ENCODE measurements at regions of chr4 and their contacts with region 1.

Region 1: DNA sequence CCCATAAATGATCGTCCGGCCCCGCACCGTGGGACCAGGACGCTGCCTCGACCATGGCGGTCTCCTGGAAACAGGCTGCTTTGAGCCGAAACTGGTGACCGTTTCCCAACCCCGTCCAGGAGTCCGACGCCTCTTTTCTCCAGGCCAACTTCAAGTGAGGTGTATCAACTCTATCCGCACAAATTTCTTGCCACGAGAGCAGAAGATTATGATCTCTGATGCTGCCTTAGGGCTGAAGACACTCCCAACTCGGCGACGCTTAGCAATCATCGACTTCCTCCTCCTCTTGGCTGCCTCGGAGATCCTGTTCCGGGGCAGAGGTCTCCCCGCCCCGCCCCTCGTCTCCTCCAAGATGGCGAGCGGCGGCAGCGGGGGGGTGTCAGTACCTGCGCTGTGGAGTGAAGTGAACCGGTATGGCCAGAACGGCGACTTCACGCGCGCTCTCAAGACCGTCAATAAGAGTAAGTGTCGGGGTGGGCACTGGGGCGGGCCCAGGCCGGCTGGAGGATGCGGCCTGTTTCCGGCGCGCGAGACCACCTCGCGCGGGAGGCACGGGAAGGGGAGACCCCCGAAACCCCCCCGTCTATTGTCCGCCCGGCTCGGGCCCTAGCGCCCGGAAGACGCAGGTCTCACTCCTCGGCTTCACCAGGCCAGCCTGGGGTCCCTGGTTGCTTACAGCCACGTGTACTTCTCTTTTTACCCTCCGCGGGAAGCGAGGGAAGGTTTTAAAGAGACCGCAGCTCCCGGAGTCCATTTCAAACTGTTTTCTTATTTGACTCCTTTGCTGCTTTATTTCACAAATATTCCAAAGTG is at the start of gene SRP72:
- DNase-seq: peak; percentile 93
- H3K4me3 ChIP-seq: peak within 1 kb of the TSS; percentile 95 to 100 (median 98)
- H3K27ac ChIP-seq: peak within 1 kb of the TSS; percentile 88 to 95 (median 90)
- H3K4me1 ChIP-seq: peaks cover 0 to 53% (median 34%) of the 10 kb centered on the region in 4 donors
- H3K27me3 ChIP-seq: no peaks in the 10 kb centered on the region
- CTCF ChIP-seq: no peak
- EP300 ChIP-seq: no peak
- POLR2A ChIP-seq: peak; percentile 64 to 73
- total RNA-seq, gene SRP72: 45.9 to 55.9 (median 48.4) TPM

Region 2: GRCh38 chr4:56387023-56388001 is 80.2 kb before region 1 on chr4 and contains the start of gene AASDH:
- intact Hi-C with region 1: loop called (anchors 1 kb)
- DNase-seq: peak; percentile 95
- H3K4me3 ChIP-seq: peak within 1 kb of the TSS; percentile 62 to 77 (median 74)
- H3K27ac ChIP-seq: peak within 1 kb of the TSS; percentile 82 to 95 (median 90)
- H3K4me1 ChIP-seq: peaks cover 0 to 20% (median 14%) of the 10 kb centered on the region in 4 donors
- H3K27me3 ChIP-seq: no peaks in the 10 kb centered on the region
- CTCF ChIP-seq: no peak
- EP300 ChIP-seq: peak in 1 of 4 donors; percentile 69
- POLR2A ChIP-seq: peak; percentile 62 to 84
- total RNA-seq, gene AASDH: 5.5 to 13.4 (median 9.3) TPM

Region 3: DNA sequence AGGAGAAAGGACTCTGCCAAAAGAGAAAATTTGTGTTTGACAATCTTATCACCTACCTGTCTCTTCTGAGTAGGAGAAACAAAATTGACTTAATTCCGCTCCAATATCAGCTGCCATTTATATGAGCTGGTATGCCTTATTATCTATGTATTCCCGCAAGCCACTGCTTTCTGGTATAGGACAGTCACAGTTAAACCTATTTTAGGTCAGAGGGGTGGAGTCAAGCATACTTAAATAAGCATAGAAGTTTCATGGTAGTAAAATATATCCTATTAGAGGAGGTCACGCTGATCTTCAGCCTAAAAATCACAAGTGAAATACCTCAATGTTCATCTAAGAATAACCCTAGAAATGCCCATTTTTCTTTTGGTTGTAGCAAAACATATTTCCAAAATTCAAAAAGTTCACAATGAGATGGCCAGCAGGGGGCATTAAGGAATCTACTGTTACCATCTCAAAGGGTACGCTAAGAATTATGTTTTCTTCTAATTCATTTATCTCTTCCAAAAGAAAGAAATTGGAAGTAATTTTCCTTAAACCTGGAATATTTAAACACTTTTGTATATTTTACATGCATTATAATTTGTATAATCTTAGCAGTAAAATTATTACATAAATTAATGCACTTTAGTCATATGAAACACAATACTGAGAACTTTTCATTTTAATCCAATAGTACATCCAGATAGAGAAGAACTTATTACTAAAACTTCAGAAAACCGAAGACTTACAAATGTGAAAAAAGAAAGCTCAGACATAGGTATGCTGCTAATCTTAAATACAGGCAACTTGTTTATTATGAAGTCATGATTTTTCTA is 42.6 kb before region 1 on chr4:
- intact Hi-C with region 1: loop called (anchors 2 kb)
- DNase-seq: no peak
- H3K4me3 ChIP-seq: no peak overlapping the region
- H3K27ac ChIP-seq: no peak overlapping the region
- H3K4me1 ChIP-seq: no peaks in the 10 kb centered on the region
- H3K27me3 ChIP-seq: no peaks in the 10 kb centered on the region
- CTCF ChIP-seq: peak in 3 of 4 experiments; percentile 34 to 60 (median 41)
- EP300 ChIP-seq: no peak
- POLR2A ChIP-seq: no peak

Region 4: GRCh38 chr4:56435306-56435926 is 32.1 kb before region 1 on chr4 and contains the start of gene PPAT:
- intact Hi-C with region 1: loop called (anchors 2 kb)
- DNase-seq: peak; percentile 99
- H3K4me3 ChIP-seq: peak within 1 kb of the TSS; percentile 50 to 77 (median 70)
- H3K27ac ChIP-seq: peak within 1 kb of the TSS; percentile 97 to 98 (median 98)
- H3K4me1 ChIP-seq: peaks cover 0 to 33% (median 26%) of the 10 kb centered on the region in 4 donors
- H3K27me3 ChIP-seq: no peaks in the 10 kb centered on the region
- CTCF ChIP-seq: peak in 2 of 4 experiments; percentile 31 to 35
- EP300 ChIP-seq: no peak
- POLR2A ChIP-seq: peak; percentile 28 to 30
- total RNA-seq, gene PPAT: 4.2 to 6.3 (median 5.1) TPM

Region 5: DNA sequence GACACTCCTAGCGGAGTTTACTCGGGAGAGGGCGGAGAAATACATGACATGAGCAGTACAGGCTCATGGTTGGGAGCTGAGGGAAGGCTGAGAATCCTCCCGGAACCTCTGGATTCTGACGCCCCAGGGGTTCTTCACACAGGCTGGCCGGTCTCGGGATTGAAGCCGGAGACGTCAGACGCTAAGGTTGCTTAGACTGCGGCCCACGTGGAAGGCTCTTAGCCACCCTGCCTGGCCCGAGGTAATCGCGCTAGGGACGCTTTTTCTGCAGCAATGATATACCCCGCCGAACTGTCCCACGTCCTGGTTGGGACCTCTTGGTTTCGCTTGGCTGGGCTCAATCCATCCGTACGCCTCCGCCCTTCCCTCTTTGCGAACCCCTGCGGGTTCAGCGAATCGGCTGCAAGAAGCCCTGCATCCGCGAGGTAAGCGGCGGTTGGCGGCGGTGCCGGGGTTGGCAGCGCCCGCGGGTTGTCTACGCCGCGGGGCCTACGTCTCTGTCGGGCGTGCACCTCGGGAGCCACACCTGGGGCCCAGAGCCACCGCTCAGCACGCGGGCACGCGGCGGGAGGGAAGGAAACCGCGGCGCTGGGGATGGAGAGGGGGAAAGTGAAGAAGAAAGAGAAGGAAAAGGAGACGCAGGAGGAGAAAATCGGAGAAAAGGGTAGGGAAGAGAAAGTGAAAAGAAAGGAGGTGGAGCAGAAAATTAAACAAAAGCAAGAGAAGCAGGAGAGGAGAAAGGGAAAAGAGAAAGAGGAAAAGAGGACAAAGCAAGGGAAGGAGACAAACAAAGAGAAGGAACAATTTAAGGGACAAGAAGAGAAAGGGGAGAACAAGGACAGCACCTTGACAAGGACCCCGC is 38.0 kb after region 1 on chr4 and contains the start of gene ARL9:
- intact Hi-C with region 1: loop called (anchors 5 kb)
- DNase-seq: peak; percentile 78
- H3K4me3 ChIP-seq: peak within 1 kb of the TSS; percentile 41 to 62 (median 58)
- H3K27ac ChIP-seq: peak within 1 kb of the TSS; percentile 62 to 73 (median 64)
- H3K4me1 ChIP-seq: peaks cover 0 to 18% (median 12%) of the 10 kb centered on the region in 4 donors
- H3K27me3 ChIP-seq: no peaks in the 10 kb centered on the region
- CTCF ChIP-seq: no peak
- EP300 ChIP-seq: no peak
- POLR2A ChIP-seq: no peak
- total RNA-seq, gene ARL9: 0.54 to 1.1 (median 0.66) TPM in 3 of 4 donors, not detected in the other

Region 6: DNA sequence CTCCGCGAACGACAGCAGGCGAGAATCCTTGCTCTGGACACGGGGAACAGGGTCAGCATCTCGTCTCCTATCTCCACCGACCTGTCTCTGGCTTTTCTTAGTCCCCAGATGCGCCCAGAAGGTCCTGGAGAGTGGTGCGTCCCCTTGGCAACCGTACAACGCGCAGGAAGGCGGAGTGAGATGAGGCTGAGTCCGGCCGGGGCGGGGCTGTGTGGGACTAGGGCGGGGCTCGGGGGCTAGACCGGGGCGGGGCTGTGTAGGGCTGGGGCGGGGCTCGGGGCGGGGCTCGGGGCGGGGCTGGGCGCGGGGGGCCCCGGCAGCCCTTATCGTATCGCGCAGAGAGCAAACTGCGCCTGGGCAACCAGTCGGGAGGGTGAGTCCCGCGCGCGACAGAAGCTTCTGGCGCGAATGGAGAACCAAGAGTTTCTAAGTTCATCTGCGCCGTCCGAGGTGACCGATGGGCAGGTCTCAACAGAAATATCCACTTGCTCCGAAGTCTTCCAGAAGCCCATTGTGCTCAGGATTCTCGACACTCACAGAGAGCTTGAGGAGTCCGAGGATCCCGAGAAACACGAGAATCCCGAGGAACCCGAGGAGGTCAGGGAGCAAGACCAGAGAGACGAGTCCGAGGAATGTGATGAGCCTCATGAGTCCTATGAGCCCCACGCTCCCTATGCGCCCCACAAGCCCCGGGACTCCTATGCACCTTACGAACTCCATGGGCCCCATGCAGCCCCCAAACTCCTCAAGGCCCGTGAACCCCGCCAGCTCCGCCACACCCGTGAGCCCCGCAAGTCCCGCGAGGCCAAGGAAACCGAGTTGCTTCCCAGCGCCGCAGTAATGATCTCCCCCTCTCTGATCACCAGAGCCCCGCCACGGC is 63.0 kb after region 1 on chr4:
- intact Hi-C with region 1: loop called (anchors 1 kb)
- DNase-seq: peak; percentile 96
- H3K4me3 ChIP-seq: peak overlapping the region; percentile 49 to 59 (median 54)
- H3K27ac ChIP-seq: peak overlapping the region in 3 of 4 donors; percentile 71 to 78 (median 74)
- H3K4me1 ChIP-seq: peaks cover 0 to 24% (median 17%) of the 10 kb centered on the region in 4 donors
- H3K27me3 ChIP-seq: no peaks in the 10 kb centered on the region
- CTCF ChIP-seq: no peak
- EP300 ChIP-seq: no peak
- POLR2A ChIP-seq: peak; percentile 32 to 35

Region 7: DNA sequence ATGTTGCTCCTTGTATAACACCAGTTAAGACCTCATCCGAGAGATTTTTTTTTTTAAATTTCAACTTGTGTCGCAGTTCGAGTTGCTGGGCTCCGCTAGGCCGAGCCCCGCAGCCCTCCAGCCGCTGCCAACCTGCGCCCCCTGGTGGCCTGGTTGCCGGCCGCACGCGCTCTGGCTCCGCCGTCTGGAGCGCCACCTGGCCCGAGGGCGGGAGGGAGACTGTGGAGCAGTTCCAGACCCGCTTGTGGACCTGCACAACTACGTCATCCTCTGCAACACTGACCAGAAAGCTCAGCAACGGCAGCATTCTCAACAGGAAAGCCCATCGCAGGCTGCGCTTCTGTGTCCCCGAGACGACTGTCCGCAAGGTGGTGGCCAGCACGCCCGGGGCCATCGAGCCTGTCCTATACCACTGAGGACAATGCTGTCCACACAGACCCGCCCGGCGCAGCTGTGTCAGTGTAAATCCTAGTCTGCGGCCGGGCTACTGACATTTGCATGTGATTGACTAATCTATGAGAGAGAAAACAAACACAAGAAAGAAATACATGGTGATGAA is 77.2 kb after region 1 on chr4:
- intact Hi-C with region 1: loop called (anchors 1 kb)
- DNase-seq: peak; percentile 93
- H3K4me3 ChIP-seq: peak overlapping the region; percentile 26 to 44 (median 35)
- H3K27ac ChIP-seq: peak overlapping the region in 3 of 4 donors; percentile 28 to 57 (median 54)
- H3K4me1 ChIP-seq: peaks cover 0 to 13% (median 6%) of the 10 kb centered on the region in 4 donors
- H3K27me3 ChIP-seq: no peaks in the 10 kb centered on the region
- CTCF ChIP-seq: peak; percentile 83 to 97 (median 89)
- EP300 ChIP-seq: no peak
- POLR2A ChIP-seq: no peak